Heart right ventricle (tissue), 16 donors: ENCODE measurements at regions of chr2 and their contacts with region 1.

Region 1: GRCh38 chr2:182426082-182426917 is 536 bp downstream of the PDE1A start:
- DNase-seq: no peak
- ATAC-seq: peak; percentile 36 to 85 (median 66)
- H3K4me3 ChIP-seq: peak overlapping the region; percentile 11 to 61 (median 52)
- H3K27ac ChIP-seq: peak overlapping the region; percentile 11 to 82 (median 74)
- H3K4me1 ChIP-seq: peaks cover 0 to 13% (median 0%) of the 10 kb centered on the region in 9 donors
- H3K27me3 ChIP-seq: no peaks in the 10 kb centered on the region
- CTCF ChIP-seq: no peak

Region 2: GRCh38 chr2:182186132-182186735 is 240.1 kb before region 1 on chr2:
- intact Hi-C with region 1: loop called in 2 of 10 experiments (anchors 2 to 10 kb)
- DNase-seq: no peak
- ATAC-seq: peak; percentile 22 to 72 (median 51)
- H3K4me3 ChIP-seq: no peak overlapping the region
- H3K27ac ChIP-seq: peak overlapping the region in 3 of 10 donors; percentile 3 to 45 (median 27)
- H3K4me1 ChIP-seq: peaks cover 0 to 10% (median 5%) of the 10 kb centered on the region in 9 donors
- H3K27me3 ChIP-seq: no peaks in the 10 kb centered on the region
- CTCF ChIP-seq: peak; percentile 68 to 90 (median 81)

Region 3: DNA sequence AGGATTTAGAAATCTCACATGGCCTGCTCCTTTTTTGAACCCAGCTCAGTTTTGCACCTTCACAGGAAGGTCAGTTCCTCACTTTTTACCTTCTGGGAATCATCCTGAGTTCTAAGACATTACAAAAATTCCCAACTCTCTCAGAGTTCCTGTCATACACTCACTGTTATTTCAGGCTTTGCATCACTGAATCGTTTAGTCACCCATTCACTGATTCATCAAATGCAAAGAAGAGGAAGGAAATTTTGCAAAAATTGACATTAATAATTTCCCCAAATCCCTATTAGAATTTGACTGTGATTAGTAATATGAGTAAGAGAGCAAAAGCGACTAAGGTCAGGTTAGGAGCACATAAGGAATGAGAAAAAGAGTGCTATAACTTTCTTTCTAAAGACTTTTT is 197.0 kb before region 1 on chr2:
- intact Hi-C with region 1: loop called in 1 of 10 experiments (anchors 10 kb)
- DNase-seq: no peak
- ATAC-seq: no peak
- H3K4me3 ChIP-seq: no peak overlapping the region
- H3K27ac ChIP-seq: peak overlapping the region in 3 of 10 donors; percentile 68 to 75 (median 71)
- H3K4me1 ChIP-seq: peaks cover 0 to 34% (median 3%) of the 10 kb centered on the region in 9 donors
- H3K27me3 ChIP-seq: no peaks in the 10 kb centered on the region
- CTCF ChIP-seq: no peak

Region 4: GRCh38 chr2:182240862-182241371 is 185.4 kb before region 1 on chr2:
- intact Hi-C with region 1: loop called in 2 of 10 experiments (anchors 5 to 10 kb)
- DNase-seq: no peak
- ATAC-seq: peak; percentile 43 to 75 (median 66)
- H3K4me3 ChIP-seq: no peak overlapping the region
- H3K27ac ChIP-seq: peak overlapping the region in 2 of 10 donors; percentile 49 to 50
- H3K4me1 ChIP-seq: peaks cover 0 to 22% (median 9%) of the 10 kb centered on the region in 9 donors
- H3K27me3 ChIP-seq: no peaks in the 10 kb centered on the region
- CTCF ChIP-seq: peak in 6 of 9 donors; percentile 32 to 53 (median 48)

Region 5: GRCh38 chr2:182372661-182373060 is 53.6 kb before region 1 on chr2:
- intact Hi-C with region 1: loop called in 3 of 10 experiments (anchors 5 to 10 kb)
- DNase-seq: peak in 1 of 2 donors; percentile 39
- ATAC-seq: peak; percentile 78 to 98 (median 91)
- H3K4me3 ChIP-seq: no peak overlapping the region
- H3K27ac ChIP-seq: peak overlapping the region; percentile 44 to 81 (median 72)
- H3K4me1 ChIP-seq: peaks cover 0 to 48% (median 25%) of the 10 kb centered on the region in 9 donors
- H3K27me3 ChIP-seq: no peaks in the 10 kb centered on the region
- CTCF ChIP-seq: no peak

Region 6: DNA sequence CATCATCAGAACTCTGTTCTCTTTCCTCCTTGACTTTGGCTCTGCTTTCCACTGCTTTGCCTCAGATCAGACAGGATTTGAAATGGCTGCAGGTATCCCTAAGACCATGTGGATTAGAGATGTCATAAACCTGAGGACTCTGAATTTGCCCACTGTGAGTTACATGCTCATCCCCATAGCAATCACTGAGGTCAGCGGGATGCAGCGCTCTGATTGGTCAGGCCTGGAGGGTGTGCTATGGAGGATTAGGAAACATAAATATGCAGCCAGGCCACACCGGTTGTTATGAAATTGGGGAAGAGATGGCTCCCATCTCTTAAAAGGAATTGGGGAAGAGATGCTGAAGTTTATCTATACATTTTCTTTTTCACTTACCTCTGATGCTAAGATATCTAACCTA is 216.0 kb after region 1 on chr2:
- intact Hi-C with region 1: loop called in 2 of 10 experiments (anchors 10 kb)
- DNase-seq: peak; percentile 36 to 50
- ATAC-seq: peak in 6 of 8 donors; percentile 51 to 85 (median 62)
- H3K4me3 ChIP-seq: no peak overlapping the region
- H3K27ac ChIP-seq: no peak overlapping the region
- H3K4me1 ChIP-seq: no peaks in the 10 kb centered on the region
- H3K27me3 ChIP-seq: no peaks in the 10 kb centered on the region
- CTCF ChIP-seq: no peak